ENCODE measurements at regions of chr6 and their contacts with region 1.

Region 1: DNA sequence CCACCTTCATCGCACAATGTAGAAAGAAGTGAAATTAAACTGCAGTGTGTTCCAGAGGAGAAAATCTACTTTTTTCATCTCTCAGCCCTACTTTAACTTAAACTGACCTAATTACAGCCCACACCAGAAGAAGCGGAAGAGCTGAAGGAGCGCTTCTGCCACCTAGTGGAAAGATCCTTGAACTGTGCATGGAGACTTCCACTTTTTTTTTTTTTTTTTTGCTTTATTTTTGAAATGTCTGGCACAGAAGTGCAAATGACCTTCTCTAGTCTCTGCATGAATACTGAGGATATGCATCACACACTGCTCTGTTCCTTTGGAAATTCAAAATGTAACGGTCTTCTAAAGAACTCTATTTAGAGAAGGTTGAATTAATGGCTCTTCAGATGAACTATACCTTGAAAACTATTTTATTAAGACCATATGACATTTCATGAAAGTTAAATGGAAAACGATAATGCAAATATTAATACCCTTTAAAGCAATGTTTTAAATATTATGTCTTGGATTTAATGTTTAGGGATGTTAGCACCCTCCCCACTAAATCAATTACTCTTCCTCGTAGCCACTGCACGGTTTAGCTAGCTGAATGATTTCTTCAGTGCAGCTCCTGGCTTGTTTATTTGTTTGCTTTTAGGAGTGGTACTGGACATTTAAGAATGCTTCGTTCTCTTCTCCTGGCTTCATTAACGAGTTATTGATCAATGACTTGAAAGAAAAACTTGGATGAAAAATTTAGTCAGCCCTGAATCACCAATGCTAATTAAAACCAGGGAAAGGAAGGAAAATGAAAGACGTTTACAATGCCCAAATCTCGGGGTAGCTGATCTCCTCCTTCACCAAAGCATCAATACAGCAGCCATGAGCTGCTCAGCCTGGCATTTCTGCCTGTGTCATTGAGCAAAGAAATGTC is 569.6 kb upstream of the GJE1 start:
- DNase-seq: peak; percentile 30 to 78 (median 70)
- ATAC-seq: peak; percentile 94
- H3K4me3 ChIP-seq: peak overlapping the region; percentile 41
- H3K4me3 Mint-ChIP-seq: peak overlapping the region; percentile 62 to 95 (median 86)
- H3K27ac ChIP-seq: no peak overlapping the region
- H3K27ac Mint-ChIP-seq: peak overlapping the region in 8 of 9 donors; percentile 31 to 91 (median 75)
- H3K4me1 ChIP-seq: peaks cover 0 to 5% of the 10 kb centered on the region in 2 donors
- H3K4me1 Mint-ChIP-seq: peaks cover 11 to 23% (median 12%) of the 10 kb centered on the region in 7 donors
- H3K27me3 ChIP-seq: no peaks in the 10 kb centered on the region
- H3K27me3 Mint-ChIP-seq: peaks cover 0 to 10% (median 0%) of the 10 kb centered on the region in 5 donors

Region 2: DNA sequence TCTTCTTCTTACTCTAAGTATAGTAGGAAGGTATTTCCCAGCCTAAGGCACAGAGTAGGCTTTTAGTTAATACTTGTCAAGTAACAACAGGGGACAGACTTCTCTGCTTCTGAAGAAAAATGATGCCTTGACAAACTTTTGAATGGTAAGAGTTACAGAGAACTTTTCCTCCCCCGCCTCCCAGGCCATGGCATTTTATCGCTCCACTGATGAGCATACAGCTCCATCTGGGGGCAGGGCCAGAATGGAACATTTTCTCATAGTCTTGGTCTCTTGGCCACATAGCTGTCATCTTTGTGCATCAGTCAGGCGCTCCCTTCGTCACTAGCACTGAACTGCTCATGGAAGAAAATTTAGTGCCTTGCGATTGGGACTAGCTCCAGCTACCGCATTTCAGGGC is 1121.9 kb before region 1 on chr6:
- CTCF ChIA-PET with region 1: no interaction called
- POLR2A ChIA-PET with region 1: no interaction called
- intact Hi-C with region 1: loop called in 1 of 2 experiments (anchors 10 kb)
- DNase-seq: peak in 1 of 9 donors; percentile 0
- ATAC-seq: peak; percentile 46
- H3K4me3 ChIP-seq: no peak overlapping the region
- H3K4me3 Mint-ChIP-seq: no peak overlapping the region
- H3K27ac ChIP-seq: no peak overlapping the region
- H3K27ac Mint-ChIP-seq: no peak overlapping the region
- H3K4me1 ChIP-seq: no peaks in the 10 kb centered on the region
- H3K4me1 Mint-ChIP-seq: peaks cover 0 to 2% (median 0%) of the 10 kb centered on the region in 7 donors
- H3K27me3 ChIP-seq: no peaks in the 10 kb centered on the region
- H3K27me3 Mint-ChIP-seq: peaks cover 0 to 6% (median 0%) of the 10 kb centered on the region in 5 donors

Region 3: DNA sequence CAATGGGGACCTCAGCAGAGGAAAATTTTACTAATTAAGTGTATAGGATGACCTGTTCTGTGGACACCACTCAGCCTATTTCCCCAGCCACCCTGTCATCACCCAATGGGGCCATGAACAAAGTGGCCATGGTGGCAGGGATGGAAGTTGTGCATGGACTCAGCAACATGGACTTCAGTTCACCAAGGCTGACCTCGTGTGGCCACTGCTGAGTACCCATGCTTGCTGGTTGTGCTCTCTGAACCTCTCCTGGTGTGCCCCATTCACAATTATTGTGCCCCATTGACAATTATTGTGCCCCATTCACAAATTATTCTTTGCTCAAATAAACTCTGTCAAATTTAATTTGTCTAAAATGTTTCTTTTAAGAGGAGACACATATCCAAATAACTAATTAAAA is 913.0 kb before region 1 on chr6:
- CTCF ChIA-PET with region 1: no interaction called
- POLR2A ChIA-PET with region 1: no interaction called
- intact Hi-C with region 1: loop called in 1 of 2 experiments (anchors 10 kb)
- DNase-seq: no peak
- ATAC-seq: no peak
- H3K4me3 ChIP-seq: no peak overlapping the region
- H3K4me3 Mint-ChIP-seq: no peak overlapping the region
- H3K27ac ChIP-seq: no peak overlapping the region
- H3K27ac Mint-ChIP-seq: no peak overlapping the region
- H3K4me1 ChIP-seq: no peaks in the 10 kb centered on the region
- H3K4me1 Mint-ChIP-seq: no peaks in the 10 kb centered on the region
- H3K27me3 ChIP-seq: no peaks in the 10 kb centered on the region
- H3K27me3 Mint-ChIP-seq: peaks cover 0 to 11% (median 0%) of the 10 kb centered on the region in 5 donors

Region 4: DNA sequence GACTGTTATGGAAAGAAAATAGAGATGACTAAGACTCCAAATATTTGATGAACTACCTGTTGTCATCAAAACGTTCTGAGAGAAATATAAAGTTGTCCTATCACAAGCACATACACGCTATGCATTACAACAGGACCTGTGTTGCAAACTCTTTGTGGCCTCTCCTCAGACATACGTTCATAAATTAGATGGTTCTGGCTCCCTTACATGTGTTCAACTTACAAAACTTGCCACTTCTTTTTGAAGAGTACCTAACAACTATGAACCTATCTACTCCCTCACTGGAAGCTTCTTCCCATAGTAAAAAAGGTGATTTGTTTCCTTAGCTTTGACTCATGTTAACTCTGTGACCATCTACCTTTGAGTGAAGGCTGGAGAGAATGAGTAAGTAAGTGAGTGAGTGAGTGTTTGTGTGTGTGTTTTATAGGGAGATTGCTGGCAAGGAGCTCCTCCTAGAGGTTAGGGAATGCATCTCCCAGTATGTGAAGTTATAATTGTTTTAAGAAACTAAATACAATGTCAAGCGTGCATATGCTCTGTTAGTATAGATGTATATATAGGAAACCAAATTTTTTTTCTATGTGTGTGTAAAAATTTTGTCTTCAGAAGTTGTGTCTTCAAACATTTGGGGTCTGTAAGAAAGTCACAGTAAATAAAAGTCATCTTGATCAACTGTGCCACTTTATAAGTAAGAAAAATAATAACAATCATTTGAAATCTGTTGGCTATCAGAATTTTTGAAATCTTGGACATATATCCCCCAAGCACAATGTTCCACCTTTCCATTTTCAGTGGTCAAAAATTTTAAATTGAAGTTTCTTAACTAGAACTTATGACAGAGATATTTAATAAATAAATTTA is 641.5 kb before region 1 on chr6:
- CTCF ChIA-PET with region 1: no interaction called
- POLR2A ChIA-PET with region 1: no interaction called
- intact Hi-C with region 1: loop called in 1 of 2 experiments (anchors 5 kb)
- DNase-seq: no peak
- ATAC-seq: no peak
- H3K4me3 ChIP-seq: no peak overlapping the region
- H3K4me3 Mint-ChIP-seq: no peak overlapping the region
- H3K27ac ChIP-seq: no peak overlapping the region
- H3K27ac Mint-ChIP-seq: no peak overlapping the region
- H3K4me1 ChIP-seq: no peaks in the 10 kb centered on the region
- H3K4me1 Mint-ChIP-seq: no peaks in the 10 kb centered on the region
- H3K27me3 ChIP-seq: no peaks in the 10 kb centered on the region
- H3K27me3 Mint-ChIP-seq: peaks cover 0 to 15% (median 3%) of the 10 kb centered on the region in 5 donors

Region 5: DNA sequence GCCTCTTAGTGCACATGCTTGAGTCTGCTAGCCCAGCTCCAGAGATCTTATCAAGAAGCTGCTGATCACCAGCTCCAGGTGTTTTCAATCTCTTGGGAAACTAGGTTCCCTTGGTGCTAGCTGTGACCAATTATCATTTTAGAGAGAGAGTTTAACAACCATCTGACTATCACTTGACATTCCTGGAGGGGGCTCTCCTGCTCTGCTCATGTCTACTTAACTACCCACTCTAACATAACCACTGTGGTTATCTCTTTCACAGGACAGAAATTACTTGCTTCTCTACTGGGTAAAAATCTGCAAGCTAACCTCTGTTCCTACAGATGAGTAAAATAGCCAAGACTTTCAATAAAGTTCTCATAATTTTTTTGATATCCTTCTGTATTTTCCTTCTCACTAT is 253.8 kb before region 1 on chr6:
- CTCF ChIA-PET with region 1: no interaction called
- POLR2A ChIA-PET with region 1: no interaction called
- intact Hi-C with region 1: loop called (anchors 1 to 5 kb)
- DNase-seq: peak in 2 of 9 donors; percentile 4 to 15
- ATAC-seq: peak; percentile 62
- H3K4me3 ChIP-seq: no peak overlapping the region
- H3K4me3 Mint-ChIP-seq: no peak overlapping the region
- H3K27ac ChIP-seq: no peak overlapping the region
- H3K27ac Mint-ChIP-seq: no peak overlapping the region
- H3K4me1 ChIP-seq: no peaks in the 10 kb centered on the region
- H3K4me1 Mint-ChIP-seq: no peaks in the 10 kb centered on the region
- H3K27me3 ChIP-seq: no peaks in the 10 kb centered on the region
- H3K27me3 Mint-ChIP-seq: peaks cover 0 to 7% (median 0%) of the 10 kb centered on the region in 5 donors

Region 6: GRCh38 chr6:141483598-141484061 is 79.5 kb before region 1 on chr6:
- CTCF ChIA-PET with region 1: no interaction called
- POLR2A ChIA-PET with region 1: no interaction called
- intact Hi-C with region 1: loop called (anchors 1 kb)
- DNase-seq: peak in 8 of 9 donors; percentile 32 to 85 (median 82)
- ATAC-seq: peak; percentile 98
- H3K4me3 ChIP-seq: peak overlapping the region; percentile 47
- H3K4me3 Mint-ChIP-seq: peak overlapping the region; percentile 74 to 93 (median 84)
- H3K27ac ChIP-seq: peak overlapping the region; percentile 68
- H3K27ac Mint-ChIP-seq: peak overlapping the region; percentile 81 to 97 (median 92)
- H3K4me1 ChIP-seq: peaks cover 11 to 24% of the 10 kb centered on the region in 2 donors
- H3K4me1 Mint-ChIP-seq: peaks cover 11 to 57% (median 41%) of the 10 kb centered on the region in 7 donors
- H3K27me3 ChIP-seq: no peaks in the 10 kb centered on the region
- H3K27me3 Mint-ChIP-seq: no peaks in the 10 kb centered on the region

Region 7: GRCh38 chr6:141587482-141588266 is 24.6 kb after region 1 on chr6:
- CTCF ChIA-PET with region 1: no interaction called
- POLR2A ChIA-PET with region 1: no interaction called
- intact Hi-C with region 1: no loop called
- DNase-seq: no peak
- ATAC-seq: no peak
- H3K4me3 ChIP-seq: no peak overlapping the region
- H3K4me3 Mint-ChIP-seq: no peak overlapping the region
- H3K27ac ChIP-seq: no peak overlapping the region
- H3K27ac Mint-ChIP-seq: no peak overlapping the region
- H3K4me1 ChIP-seq: no peaks in the 10 kb centered on the region
- H3K4me1 Mint-ChIP-seq: no peaks in the 10 kb centered on the region
- H3K27me3 ChIP-seq: no peaks in the 10 kb centered on the region
- H3K27me3 Mint-ChIP-seq: peaks cover 0 to 17% (median 9%) of the 10 kb centered on the region in 5 donors

Region 8: GRCh38 chr6:141783585-141783984 is 220.5 kb after region 1 on chr6:
- CTCF ChIA-PET with region 1: no interaction called
- POLR2A ChIA-PET with region 1: no interaction called
- intact Hi-C with region 1: no loop called
- DNase-seq: no peak
- ATAC-seq: no peak
- H3K4me3 ChIP-seq: no peak overlapping the region
- H3K4me3 Mint-ChIP-seq: no peak overlapping the region
- H3K27ac ChIP-seq: no peak overlapping the region
- H3K27ac Mint-ChIP-seq: no peak overlapping the region
- H3K4me1 ChIP-seq: no peaks in the 10 kb centered on the region
- H3K4me1 Mint-ChIP-seq: peaks cover 0 to 3% (median 0%) of the 10 kb centered on the region in 7 donors
- H3K27me3 ChIP-seq: peaks cover 0 to 3% of the 10 kb centered on the region in 2 donors
- H3K27me3 Mint-ChIP-seq: peaks cover 0 to 5% (median 0%) of the 10 kb centered on the region in 5 donors